ENCODE measurements at regions of chr4 and their contacts with region 1.

Region 1: DNA sequence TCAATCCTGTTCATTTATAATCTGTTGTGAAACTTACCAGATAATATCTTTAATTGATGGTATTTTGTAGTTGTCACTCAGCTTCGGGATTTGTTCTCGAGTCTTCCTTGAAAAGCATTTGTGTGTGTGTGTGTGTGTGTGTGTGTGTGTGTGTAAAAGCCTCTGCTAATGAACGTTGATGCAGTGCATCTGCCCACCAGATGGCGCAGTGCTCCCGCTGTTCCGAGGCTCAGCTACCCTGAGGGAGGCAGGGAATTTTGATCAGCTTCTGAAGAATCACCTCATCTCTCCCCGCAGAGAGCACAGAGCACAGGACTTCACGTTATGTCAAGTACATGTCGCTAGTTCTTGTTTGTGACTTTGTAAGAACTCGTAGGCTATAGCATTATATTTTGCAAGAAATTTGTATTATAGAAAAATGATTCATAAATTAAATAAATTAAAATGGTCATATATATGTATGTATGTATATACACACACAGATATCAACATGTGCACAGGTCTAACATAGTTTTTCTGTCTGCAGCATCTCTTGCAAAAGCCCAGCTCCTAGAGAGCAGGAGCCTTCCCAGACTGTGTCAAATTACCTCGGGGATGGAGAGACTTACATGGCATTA is 316.7 kb upstream of the IGFBP7 start:
- DNase-seq: no peak
- H3K4me3 ChIP-seq: no peak overlapping the region
- H3K27me3 ChIP-seq: peaks cover 4% of the 10 kb centered on the region; the same call in 1 of the 2 replicates
- CTCF ChIP-seq: peak; percentile 79

Region 2: GRCh38 chr4:57405385-57405784 is 21.5 kb before region 1 on chr4:
- CTCF ChIA-PET with region 1: interaction called, 16 read pairs
- POLR2A ChIA-PET with region 1: no interaction called
- DNase-seq: peak; percentile 50
- H3K4me3 ChIP-seq: no peak overlapping the region
- H3K27me3 ChIP-seq: no peaks in the 10 kb centered on the region
- CTCF ChIP-seq: no peak

Region 3: GRCh38 chr4:57410331-57411052 is 16.4 kb before region 1 on chr4:
- CTCF ChIA-PET with region 1: interaction called, 16 read pairs
- POLR2A ChIA-PET with region 1: no interaction called
- DNase-seq: no peak
- H3K4me3 ChIP-seq: no peak overlapping the region
- H3K27me3 ChIP-seq: no peaks in the 10 kb centered on the region
- CTCF ChIP-seq: no peak

Region 4: DNA sequence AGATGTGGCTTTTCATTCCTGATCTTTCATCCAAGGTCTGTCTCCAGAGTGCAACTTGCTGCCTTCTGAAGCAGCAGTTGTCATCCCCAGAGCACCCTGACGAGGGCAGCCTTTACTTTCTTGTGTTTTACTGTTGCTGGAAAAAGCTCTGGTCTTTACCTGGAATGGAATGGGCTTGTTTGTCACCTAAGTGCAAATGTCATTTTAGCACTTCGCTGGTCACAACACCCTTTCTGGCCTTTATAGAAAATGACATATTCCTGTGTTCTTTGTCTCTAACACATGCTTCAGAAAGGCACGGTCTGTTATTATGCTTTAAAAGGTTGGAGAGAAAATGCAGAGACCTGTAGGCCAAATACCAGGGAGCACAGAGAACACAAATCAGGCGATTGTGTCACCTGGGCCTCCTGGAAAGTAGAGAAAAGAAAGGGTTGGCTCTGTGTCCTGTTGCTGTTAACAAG is 16.0 kb after region 1 on chr4:
- CTCF ChIA-PET with region 1: interaction called, 29 read pairs
- POLR2A ChIA-PET with region 1: no interaction called
- DNase-seq: no peak
- H3K4me3 ChIP-seq: no peak overlapping the region
- H3K27me3 ChIP-seq: peaks cover 2% of the 10 kb centered on the region; the same call in 1 of the 2 replicates
- CTCF ChIP-seq: peak; percentile 73

Region 5: GRCh38 chr4:57734104-57734670 is 307.3 kb after region 1 on chr4:
- CTCF ChIA-PET with region 1: no interaction called
- POLR2A ChIA-PET with region 1: no interaction called
- DNase-seq: no peak
- H3K4me3 ChIP-seq: no peak overlapping the region
- H3K27me3 ChIP-seq: no peaks in the 10 kb centered on the region
- CTCF ChIP-seq: no peak

Region 6: GRCh38 chr4:58119298-58119697 is 692.4 kb after region 1 on chr4:
- CTCF ChIA-PET with region 1: no interaction called
- POLR2A ChIA-PET with region 1: no interaction called
- DNase-seq: no peak
- H3K4me3 ChIP-seq: no peak overlapping the region
- H3K27me3 ChIP-seq: no peaks in the 10 kb centered on the region
- CTCF ChIP-seq: no peak

Measured in BJ (cell line).